PC-3 (cell line): ENCODE measurements at regions of chr3 and their contacts with region 1.

Region 1: DNA sequence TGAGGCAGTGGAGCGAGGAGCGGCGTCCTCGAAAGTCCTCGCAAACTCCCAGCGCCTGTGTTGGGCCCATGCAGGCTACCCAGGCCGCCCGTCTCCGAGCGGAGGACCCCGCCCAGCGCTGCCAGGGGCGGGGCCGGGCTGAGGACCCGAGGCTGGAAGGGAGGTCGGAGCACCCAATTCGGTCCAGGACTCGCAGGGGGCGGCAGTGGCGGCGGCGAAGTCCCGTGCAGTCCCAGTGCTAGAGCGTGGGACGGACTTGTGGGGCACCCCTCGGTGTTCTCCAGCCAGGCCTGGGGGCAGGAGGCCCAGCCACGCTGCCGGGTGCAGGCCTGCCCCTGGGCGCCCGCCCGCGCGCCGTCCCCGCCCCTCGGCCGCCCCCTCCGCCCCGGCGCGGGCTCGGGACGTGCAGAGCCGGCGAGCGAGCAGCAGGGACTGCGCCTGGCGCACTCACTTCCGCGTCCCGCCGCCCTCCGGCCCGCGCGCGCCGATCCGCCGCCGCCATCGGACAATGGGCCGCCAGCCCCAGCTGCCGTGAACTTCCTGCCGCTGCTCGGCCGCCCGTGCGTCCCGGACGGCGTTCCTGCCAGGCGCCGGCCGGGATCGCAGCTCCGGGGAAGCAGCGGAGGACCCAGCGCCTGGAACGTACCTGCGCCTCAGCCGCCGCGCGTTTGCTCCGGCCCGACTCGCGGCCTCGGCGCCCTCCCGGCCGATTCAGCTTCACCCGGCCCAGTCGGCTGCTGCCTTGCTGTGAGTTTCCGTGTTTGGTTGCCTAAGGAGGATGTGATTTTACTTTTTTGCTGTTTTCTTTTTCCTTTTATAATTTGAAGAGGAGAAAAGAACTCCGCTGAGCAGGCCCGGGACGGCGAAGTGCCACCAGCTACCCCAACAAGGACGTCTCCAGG is 592 bp upstream of the LIMD1 start:
- DNase-seq: peak; percentile 83
- ATAC-seq: peak; percentile 68
- H3K4me3 ChIP-seq: peak overlapping the region; percentile 89
- H3K27ac ChIP-seq: peak overlapping the region; percentile 80
- H3K4me1 ChIP-seq: peaks cover 38% of the 10 kb centered on the region
- H3K27me3 ChIP-seq: no peaks in the 10 kb centered on the region
- CTCF ChIP-seq: no peak

Region 2: GRCh38 chr3:45224824-45225464 is 369.0 kb before region 1 on chr3:
- CTCF ChIA-PET with region 1: no interaction called
- POLR2A ChIA-PET with region 1: no interaction called
- intact Hi-C with region 1: loop called (anchors 5 kb)
- DNase-seq: peak; percentile 73
- ATAC-seq: peak; percentile 61
- H3K4me3 ChIP-seq: peak overlapping the region; percentile 76
- H3K27ac ChIP-seq: peak overlapping the region; percentile 64
- H3K4me1 ChIP-seq: peaks cover 15% of the 10 kb centered on the region
- H3K27me3 ChIP-seq: no peaks in the 10 kb centered on the region
- CTCF ChIP-seq: peak; percentile 58

Region 3: GRCh38 chr3:45528429-45528828 is 65.5 kb before region 1 on chr3:
- CTCF ChIA-PET with region 1: no interaction called
- POLR2A ChIA-PET with region 1: no interaction called
- intact Hi-C with region 1: loop called (anchors 5 kb)
- DNase-seq: peak; percentile 45
- ATAC-seq: peak; percentile 90
- H3K4me3 ChIP-seq: no peak overlapping the region
- H3K27ac ChIP-seq: peak overlapping the region; percentile 37; the same call in 1 of the 2 replicates
- H3K4me1 ChIP-seq: peaks cover 12% of the 10 kb centered on the region; the same call in 1 of the 2 replicates
- H3K27me3 ChIP-seq: no peaks in the 10 kb centered on the region
- CTCF ChIP-seq: no peak

Region 4: GRCh38 chr3:45607790-45608189 is 13.8 kb after region 1 on chr3:
- CTCF ChIA-PET with region 1: no interaction called
- POLR2A ChIA-PET with region 1: interaction called, 11 read pairs
- intact Hi-C with region 1: loop called (anchors 1 kb)
- DNase-seq: peak; percentile 91
- ATAC-seq: peak; percentile 76
- H3K4me3 ChIP-seq: peak overlapping the region; percentile 17; the same call in 1 of the 2 replicates
- H3K27ac ChIP-seq: peak overlapping the region; percentile 76
- H3K4me1 ChIP-seq: peaks cover 55% of the 10 kb centered on the region
- H3K27me3 ChIP-seq: no peaks in the 10 kb centered on the region
- CTCF ChIP-seq: no peak

Region 5: DNA sequence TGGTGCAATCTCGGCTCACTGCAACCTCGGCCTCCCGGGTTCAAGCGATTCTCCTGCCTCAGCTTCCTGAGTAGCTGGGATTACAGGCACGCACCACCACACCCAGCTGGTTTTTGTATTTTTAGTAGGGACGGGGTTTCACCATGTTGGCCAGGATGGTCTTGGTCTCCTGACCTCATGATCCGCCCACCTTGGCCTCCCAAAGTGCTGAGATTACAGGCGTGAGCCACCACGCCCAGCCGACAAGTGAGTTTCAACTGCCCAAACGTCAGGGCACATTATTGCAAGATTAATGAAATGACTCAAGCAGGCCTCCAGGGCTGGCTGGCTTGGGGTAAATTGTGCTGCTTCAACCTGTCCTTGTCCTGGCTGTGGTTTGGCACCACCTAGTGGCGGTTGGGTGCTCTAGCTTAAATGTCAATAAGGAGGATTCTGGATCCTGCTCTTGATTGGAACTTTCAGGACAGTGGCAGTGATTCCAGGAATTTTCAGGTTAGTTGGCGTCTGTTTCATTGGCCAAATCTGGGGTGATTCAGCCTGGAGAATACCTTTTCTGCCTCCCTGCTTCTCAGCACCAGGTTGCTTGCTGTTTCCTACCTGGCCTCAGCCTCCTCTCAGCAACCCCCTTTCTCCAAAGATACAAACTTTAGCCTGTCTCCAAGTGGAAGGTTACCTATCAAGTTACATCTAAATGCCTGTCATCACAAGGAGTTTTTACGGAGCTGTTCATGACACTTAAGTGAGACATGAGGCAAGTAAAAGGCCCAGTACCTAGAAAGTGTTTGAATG is 62.8 kb after region 1 on chr3:
- CTCF ChIA-PET with region 1: interaction called, 15 read pairs
- POLR2A ChIA-PET with region 1: no interaction called
- intact Hi-C with region 1: loop called (anchors 1 kb)
- DNase-seq: peak; percentile 97
- ATAC-seq: peak; percentile 76
- H3K4me3 ChIP-seq: no peak overlapping the region
- H3K27ac ChIP-seq: peak overlapping the region; percentile 49
- H3K4me1 ChIP-seq: peaks cover 38% of the 10 kb centered on the region
- H3K27me3 ChIP-seq: no peaks in the 10 kb centered on the region
- CTCF ChIP-seq: peak; percentile 94

Region 6: GRCh38 chr3:45776611-45777010 is 182.7 kb after region 1 on chr3:
- CTCF ChIA-PET with region 1: no interaction called
- POLR2A ChIA-PET with region 1: no interaction called
- intact Hi-C with region 1: no loop called
- DNase-seq: no peak
- ATAC-seq: no peak
- H3K4me3 ChIP-seq: no peak overlapping the region
- H3K27ac ChIP-seq: no peak overlapping the region
- H3K4me1 ChIP-seq: no peaks in the 10 kb centered on the region
- H3K27me3 ChIP-seq: no peaks in the 10 kb centered on the region
- CTCF ChIP-seq: no peak